ENCODE measurements at regions of chr10 and their contacts with region 1.

Region 1: GRCh38 chr10:91856637-91857036 is 52.6 kb downstream of the FGFBP3 start:
- DNase-seq: no peak
- H3K4me3 ChIP-seq: no peak overlapping the region
- CTCF ChIP-seq: no peak
- POLR2A ChIP-seq: no peak

Region 2: DNA sequence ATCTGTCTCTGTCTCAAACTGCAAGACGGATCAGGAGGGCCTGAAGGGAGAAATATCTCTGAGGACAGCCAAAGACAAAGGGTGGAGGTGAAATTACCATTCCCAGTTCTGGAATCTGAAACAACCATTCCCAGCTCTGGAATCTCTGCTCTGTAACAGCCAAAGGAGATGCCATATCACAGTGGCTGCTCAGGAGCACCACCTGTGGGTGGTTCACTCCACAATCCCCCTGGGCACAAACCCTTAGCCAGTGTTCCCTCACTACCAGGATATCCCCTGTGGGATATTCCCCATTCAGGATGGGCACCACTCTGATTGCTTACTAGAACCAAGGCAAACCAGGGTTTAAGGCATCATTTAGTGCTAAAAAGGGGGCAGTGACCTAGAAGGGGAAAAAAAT is 1197.8 kb before region 1 on chr10:
- intact Hi-C with region 1: loop called (anchors 5 kb)
- DNase-seq: no peak
- H3K4me3 ChIP-seq: no peak overlapping the region
- CTCF ChIP-seq: no peak
- POLR2A ChIP-seq: no peak